Activated CD4-positive, alpha-beta memory T cell treated with anti-CD3 and anti-CD28 coated beads for 36 hours (primary cell): ENCODE measurements at regions of chr14 and their contacts with region 1.

Region 1: GRCh38 chr14:42734041-42734440 is 1127.4 kb downstream of the LRFN5 start:
- DNase-seq: no peak
- H3K4me3 Mint-ChIP-seq: no peak overlapping the region
- H3K27ac Mint-ChIP-seq: no peak overlapping the region
- H3K4me1 Mint-ChIP-seq: no peaks in the 10 kb centered on the region
- H3K27me3 Mint-ChIP-seq: no peaks in the 10 kb centered on the region

Region 2: DNA sequence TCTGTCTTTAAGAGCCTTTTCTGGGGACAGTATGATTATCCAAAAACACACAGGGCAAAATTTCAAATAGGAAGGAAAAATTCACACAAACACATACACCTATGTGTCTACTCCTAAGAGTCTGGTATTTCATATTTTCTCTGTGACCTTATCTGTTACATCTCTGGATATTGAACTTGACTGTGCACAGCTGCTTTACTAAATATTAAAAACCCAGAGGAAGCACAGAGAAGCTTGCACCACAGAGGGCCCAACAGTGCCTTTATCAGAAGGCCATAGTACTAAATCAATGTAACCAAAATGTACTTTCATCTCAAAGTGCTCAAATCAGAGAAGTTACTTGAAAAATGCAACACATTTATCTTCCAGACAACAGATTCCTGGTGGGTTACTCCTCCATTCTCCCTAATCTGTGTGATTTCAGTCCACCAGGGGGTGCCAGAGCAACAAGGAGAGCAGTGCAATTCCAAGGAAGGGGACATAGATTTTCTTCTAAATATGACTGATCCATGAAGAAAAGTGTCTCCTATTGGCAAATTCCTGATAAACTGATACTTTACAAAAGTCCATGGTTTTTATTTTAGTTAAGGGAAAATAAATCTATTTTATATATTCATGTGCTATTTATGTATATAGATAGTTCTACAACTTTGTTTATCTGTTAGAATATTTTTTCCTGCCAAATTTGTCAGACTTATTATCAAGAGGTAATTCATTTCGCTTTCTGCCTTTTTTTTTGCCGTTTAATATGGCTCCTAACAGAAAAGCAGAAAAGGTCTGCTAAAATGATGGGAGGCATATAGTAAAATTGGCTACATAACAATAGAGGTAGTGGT is 509.8 kb before region 1 on chr14:
- CTCF ChIA-PET with region 1: no interaction called
- POLR2A ChIA-PET with region 1: no interaction called
- intact Hi-C with region 1: loop called (anchors 5 kb)
- DNase-seq: peak; percentile 26
- H3K4me3 Mint-ChIP-seq: no peak overlapping the region
- H3K27ac Mint-ChIP-seq: no peak overlapping the region
- H3K4me1 Mint-ChIP-seq: no peaks in the 10 kb centered on the region
- H3K27me3 Mint-ChIP-seq: no peaks in the 10 kb centered on the region